ENCODE measurements at regions of chr16 and their contacts with region 1.

Region 1: DNA sequence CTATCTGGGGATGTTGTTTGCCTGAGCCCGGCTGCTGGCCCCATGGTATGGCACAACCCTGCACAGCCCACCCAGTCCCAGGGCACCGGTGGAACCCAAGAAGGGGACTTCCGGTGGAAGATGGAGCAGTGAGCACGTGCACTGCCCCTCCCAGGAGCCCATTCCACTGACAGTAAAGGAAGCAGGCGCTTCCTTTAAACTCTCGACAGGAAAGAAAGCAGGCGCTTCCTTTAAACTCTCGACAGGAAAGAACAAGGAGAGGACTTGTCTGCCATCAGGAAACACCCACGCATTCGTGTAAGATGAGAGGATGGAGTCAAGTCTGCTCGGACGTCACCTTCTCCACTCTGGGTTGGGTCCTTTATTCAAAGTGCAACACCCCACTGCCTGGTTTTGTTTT is 53.7 kb downstream of the IL21R start:
- DNase-seq: no peak
- H3K4me3 ChIP-seq: no peak overlapping the region
- H3K4me3 Mint-ChIP-seq: peak overlapping the region in 1 of 2 donors; percentile 21
- H3K27ac ChIP-seq: no peak overlapping the region
- H3K27ac Mint-ChIP-seq: no peak overlapping the region
- H3K4me1 ChIP-seq: peaks cover 0 to 6% of the 10 kb centered on the region in 2 donors
- H3K4me1 Mint-ChIP-seq: peaks cover 13% of the 10 kb centered on the region
- H3K27me3 ChIP-seq: peaks cover 0 to 5% of the 10 kb centered on the region in 2 donors
- H3K27me3 Mint-ChIP-seq: peaks cover 11 to 28% (median 13%) of the 10 kb centered on the region in 3 donors
- CTCF ChIP-seq: no peak

Region 2: DNA sequence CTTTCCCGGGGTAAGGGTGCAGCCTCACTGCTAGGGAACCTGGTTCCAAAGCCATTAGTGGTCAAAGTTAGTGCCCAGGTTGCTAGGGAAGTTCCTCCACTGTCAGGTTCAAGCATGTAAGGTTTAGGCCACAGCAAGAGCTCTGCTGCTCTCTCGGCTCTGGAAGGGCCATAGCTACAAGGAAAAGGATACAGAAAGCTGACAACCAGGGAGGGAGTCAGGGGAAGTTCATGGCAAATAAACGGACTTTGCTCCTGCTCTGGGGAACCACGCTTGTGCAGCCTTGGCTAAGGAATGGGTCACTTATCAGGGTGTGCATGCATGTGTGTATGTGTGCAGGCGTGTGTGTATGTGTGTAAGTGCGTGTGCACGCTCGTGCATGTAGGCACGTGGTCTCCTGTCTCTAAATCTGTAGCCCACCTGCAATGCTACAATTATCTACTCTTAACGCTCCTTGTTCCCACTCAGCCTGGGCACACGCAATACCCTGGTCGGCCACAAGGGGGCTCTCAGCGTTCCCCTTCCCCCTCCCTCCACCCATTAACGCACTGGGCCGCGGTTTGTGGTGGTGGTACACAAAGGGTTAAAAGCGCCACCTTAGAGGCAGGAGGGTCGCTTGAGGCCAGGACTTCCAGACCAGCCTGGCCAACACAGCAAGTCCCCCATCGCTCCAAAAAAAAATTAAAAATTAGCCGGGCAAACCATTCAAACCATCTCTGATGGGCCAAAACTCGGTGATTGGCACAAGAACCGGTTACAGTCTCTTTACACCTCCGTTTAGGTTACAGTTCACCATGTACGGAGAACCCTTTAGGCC is 300.8 kb before region 1 on chr16:
- intact Hi-C with region 1: loop called (anchors 2 to 5 kb)
- DNase-seq: peak; percentile 21 to 39 (median 35)
- H3K4me3 ChIP-seq: no peak overlapping the region
- H3K4me3 Mint-ChIP-seq: no peak overlapping the region
- H3K27ac ChIP-seq: no peak overlapping the region
- H3K27ac Mint-ChIP-seq: no peak overlapping the region
- H3K4me1 ChIP-seq: no peaks in the 10 kb centered on the region
- H3K4me1 Mint-ChIP-seq: peaks cover 7% of the 10 kb centered on the region
- H3K27me3 ChIP-seq: no peaks in the 10 kb centered on the region
- H3K27me3 Mint-ChIP-seq: peaks cover 0 to 4% (median 0%) of the 10 kb centered on the region in 3 donors
- CTCF ChIP-seq: peak; percentile 99

Region 3: DNA sequence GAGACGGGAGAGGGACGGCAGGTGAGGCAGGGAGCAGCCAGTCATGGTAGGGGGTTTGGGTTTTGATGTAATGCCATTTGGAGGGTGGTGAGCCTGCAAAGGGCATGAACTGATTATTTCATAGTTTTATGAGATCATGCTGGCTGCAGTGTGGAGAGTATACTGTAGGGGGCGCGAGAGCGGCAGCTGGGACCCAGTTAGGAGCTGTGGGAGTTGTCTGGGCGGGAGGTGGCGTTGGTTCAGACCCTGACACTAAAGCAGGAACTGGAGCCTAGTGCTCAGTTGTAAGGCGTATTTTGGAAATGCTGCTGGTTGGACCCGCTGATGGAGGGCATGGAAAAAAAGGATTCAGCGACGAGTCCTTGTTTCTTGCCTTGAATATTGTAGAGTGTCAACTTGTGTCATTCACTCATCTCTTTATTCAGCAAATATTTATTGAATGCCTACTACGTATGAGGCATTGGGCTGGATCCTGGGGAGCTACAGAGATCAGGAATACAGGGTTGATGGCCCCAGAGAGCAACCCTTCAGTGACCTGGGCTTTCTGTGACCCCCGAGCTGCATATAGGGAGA is 276.1 kb before region 1 on chr16:
- intact Hi-C with region 1: loop called (anchors 2 kb)
- DNase-seq: peak; percentile 79 to 82 (median 81)
- H3K4me3 ChIP-seq: no peak overlapping the region
- H3K4me3 Mint-ChIP-seq: no peak overlapping the region
- H3K27ac ChIP-seq: no peak overlapping the region
- H3K27ac Mint-ChIP-seq: no peak overlapping the region
- H3K4me1 ChIP-seq: peaks cover 6 to 14% of the 10 kb centered on the region in 2 donors
- H3K4me1 Mint-ChIP-seq: peaks cover 14% of the 10 kb centered on the region
- H3K27me3 ChIP-seq: no peaks in the 10 kb centered on the region
- H3K27me3 Mint-ChIP-seq: peaks cover 4 to 9% (median 7%) of the 10 kb centered on the region in 3 donors
- CTCF ChIP-seq: peak; percentile 89

Region 4: DNA sequence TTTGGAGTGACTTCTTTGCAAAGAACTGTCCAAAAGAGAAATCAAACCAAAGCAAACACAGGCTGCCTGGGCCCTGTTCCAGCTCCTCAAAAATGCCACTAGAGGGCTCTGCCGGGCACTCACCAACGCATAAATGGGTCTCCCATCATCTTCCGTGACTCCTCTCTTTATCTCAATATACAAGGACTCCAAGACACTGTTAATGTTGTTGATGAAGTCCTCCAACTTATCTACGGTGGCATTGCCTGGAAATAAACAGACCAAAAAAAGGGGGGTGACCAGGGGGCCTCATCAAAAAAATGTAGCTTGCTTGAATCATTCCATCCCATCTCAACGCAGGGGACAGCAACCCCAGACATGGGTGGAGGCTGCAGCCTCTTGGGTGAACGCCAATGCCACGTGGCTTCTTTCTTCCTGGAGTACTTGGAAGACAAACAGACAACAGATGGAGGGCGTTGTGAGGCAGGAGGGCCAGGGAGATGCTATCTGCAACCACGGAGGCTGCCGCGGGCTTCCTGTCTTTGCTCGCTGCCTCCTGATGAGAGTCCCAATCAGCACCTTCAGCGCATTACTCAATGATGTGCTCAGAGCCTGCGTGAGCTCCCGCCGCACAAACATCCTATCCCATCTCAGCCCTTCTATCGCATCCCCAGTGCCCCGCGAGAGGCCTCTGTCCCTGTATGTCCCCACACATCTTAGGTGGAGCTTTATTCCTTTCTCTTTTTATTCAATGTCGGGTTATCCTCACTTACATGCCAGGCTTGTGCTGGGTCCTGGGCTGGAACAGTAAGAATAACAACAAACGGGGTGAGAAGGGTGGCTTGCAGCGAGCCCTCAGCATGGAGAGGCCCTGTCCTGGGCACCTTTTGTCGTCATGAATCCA is 220.4 kb before region 1 on chr16:
- intact Hi-C with region 1: loop called (anchors 2 to 5 kb)
- DNase-seq: peak; percentile 47 to 66 (median 66)
- H3K4me3 ChIP-seq: peak overlapping the region; percentile 10 to 71 (median 29)
- H3K4me3 Mint-ChIP-seq: peak overlapping the region; percentile 80 to 89
- H3K27ac ChIP-seq: peak overlapping the region in 1 of 2 donors; percentile 54
- H3K27ac Mint-ChIP-seq: peak overlapping the region in 4 of 7 donors; percentile 15 to 83 (median 45)
- H3K4me1 ChIP-seq: peaks cover 36 to 53% of the 10 kb centered on the region in 2 donors
- H3K4me1 Mint-ChIP-seq: peaks cover 52% of the 10 kb centered on the region
- H3K27me3 ChIP-seq: no peaks in the 10 kb centered on the region
- H3K27me3 Mint-ChIP-seq: peaks cover 0 to 7% (median 2%) of the 10 kb centered on the region in 3 donors
- CTCF ChIP-seq: peak; percentile 86

Region 5: DNA sequence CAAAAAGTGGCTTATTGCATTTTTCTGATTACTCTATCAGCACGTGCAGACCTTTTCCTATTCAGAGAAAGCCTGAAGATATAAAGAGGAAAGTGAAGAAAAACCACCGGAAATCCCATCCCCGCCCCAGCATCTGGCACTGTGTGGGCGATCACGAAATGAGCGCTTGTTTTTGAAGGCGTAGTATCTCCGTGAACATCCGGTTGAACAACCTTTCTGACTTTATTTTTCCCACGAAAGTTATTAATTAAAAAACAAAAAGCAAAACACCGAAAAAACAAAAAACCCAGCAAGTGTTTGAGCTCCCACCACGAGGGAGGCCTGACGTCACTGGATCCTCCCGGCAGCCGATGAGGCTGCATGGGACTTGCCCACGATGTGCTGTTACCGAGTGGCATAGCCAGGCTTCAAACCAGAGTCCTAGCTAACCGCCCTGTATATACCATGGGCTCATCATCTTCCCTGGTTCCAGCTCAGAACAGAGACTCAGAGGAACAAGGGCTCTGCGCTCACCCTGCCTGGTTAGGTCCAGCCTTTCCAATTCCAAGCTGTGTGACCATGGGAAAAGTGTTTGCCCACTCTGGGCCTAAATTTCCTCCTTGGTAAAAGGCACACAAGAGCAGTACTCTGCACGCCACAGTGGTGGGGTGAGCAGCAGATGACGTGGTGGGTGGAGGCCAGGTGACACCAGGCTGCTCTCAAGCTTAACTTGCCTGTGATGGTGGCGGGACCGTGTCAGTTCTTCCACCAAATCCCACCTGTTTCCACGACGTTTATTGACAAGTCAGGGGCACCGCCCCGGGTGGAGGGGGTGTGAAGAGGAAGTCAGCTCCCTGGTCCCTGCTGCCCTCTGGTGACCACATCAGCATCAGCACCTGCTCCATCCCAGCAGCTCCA is 88.0 kb before region 1 on chr16:
- intact Hi-C with region 1: loop called in 1 of 2 experiments (anchors 5 kb)
- DNase-seq: peak; percentile 72 to 90 (median 73)
- H3K4me3 ChIP-seq: peak overlapping the region; percentile 2 to 68 (median 25)
- H3K4me3 Mint-ChIP-seq: peak overlapping the region; percentile 66 to 85
- H3K27ac ChIP-seq: peak overlapping the region; percentile 37 to 82
- H3K27ac Mint-ChIP-seq: peak overlapping the region; percentile 80 to 90 (median 89)
- H3K4me1 ChIP-seq: peaks cover 22 to 24% of the 10 kb centered on the region in 2 donors
- H3K4me1 Mint-ChIP-seq: peaks cover 23% of the 10 kb centered on the region
- H3K27me3 ChIP-seq: no peaks in the 10 kb centered on the region
- H3K27me3 Mint-ChIP-seq: peaks cover 0 to 5% (median 0%) of the 10 kb centered on the region in 3 donors
- CTCF ChIP-seq: peak; percentile 87